GM10248 (cell line): ENCODE measurements at regions of chr17 and their contacts with region 1.

Region 1: DNA sequence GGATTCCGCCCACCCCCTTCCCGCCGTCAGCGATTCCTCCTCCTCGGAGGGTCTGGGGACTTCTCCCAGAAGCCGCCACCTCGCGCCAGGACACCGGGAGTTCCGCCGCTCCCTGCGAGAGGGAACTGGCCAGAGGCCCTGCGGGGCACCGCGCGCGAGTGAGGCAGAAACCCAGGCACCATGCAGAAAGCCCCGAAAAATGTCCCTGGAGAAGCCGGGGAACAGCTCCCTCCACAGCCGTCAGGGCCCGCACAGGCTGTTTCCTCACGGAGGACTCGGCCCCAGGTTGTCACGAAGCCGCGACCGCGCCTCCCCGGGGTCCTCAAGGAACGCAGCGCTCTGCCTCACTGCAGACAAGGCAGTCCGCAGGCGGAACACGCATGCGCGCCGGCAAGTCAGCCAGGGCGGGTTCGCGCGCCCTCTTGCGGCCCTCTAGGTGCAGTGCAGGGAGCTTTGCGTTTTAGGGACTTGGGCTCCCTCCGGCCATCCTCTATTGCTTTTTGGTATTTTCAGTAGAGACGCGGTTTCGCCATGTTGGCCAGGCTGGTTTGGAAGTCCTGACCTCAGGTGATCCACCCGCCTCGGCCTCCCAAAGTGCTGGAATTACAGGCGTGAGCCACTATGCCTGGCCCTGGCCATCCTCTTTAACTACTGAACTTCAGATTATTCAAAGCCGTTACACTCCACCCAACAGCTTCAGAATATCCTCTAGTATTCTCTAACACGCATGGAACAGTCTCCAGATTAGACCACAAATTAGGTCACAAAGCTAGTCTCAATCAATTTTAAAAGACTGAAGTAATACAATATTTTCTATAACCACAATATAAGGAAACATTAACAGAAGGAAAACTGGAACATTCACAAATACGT is 20.3 kb upstream of the ZNF287 start:
- DNase-seq: peak; percentile 97
- CTCF ChIP-seq: peak; percentile 98

Region 2: GRCh38 chr17:16537130-16537458 is 52.2 kb before region 1 on chr17:
- CTCF ChIA-PET with region 1: interaction called, 39 read pairs
- POLR2A ChIA-PET with region 1: no interaction called
- DNase-seq: no peak
- CTCF ChIP-seq: no peak

Region 3: DNA sequence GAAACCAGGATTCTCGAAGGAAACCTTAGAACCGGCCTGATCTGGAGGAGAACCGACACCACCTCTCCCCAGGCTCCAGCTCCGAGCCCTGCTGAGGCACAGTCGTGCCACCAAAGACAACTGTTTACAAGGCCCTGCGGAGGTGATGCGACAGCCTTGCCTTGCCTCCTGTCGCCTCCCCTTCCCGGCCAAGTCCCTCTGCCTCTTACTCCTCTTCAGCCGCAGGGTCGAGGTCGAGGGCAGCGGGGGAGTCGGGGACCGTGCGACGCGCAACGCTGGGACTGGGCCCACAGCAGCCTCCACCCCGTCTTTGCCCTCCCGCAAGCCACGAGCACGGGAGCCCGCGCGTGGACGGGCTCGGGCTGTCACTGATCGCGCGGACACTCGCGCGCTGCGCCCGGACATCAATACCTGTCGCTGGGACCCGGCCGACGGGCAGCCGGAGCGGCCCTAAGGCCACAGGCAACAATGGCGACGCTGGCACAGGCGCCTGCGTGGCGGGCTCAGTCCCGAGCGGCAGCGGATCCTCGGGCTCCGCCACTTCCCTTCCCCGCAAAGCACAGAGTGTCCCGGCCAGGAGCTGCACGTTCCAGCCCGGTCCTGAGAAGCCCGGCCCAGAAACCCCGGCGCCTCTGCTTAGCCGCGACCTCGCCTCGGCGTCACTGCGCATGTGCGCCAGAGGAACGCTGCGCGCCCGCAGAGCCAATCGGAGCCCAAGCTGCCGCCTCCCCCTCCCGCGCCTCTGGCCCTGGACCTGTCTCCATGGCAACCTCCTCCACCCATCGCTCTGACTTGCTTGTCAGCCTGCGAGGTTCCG is 20.6 kb before region 1 on chr17 and contains the start of gene ZNF287:
- CTCF ChIA-PET with region 1: interaction called, 13 read pairs
- POLR2A ChIA-PET with region 1: no interaction called
- DNase-seq: peak; percentile 99
- CTCF ChIP-seq: no peak

Region 4: GRCh38 chr17:16915752-16916556 is 326.6 kb after region 1 on chr17:
- CTCF ChIA-PET with region 1: no interaction called
- POLR2A ChIA-PET with region 1: no interaction called
- DNase-seq: peak; percentile 76
- CTCF ChIP-seq: peak; percentile 75

Region 5: GRCh38 chr17:17280613-17281549 is 691.5 kb after region 1 on chr17 and contains the start of gene COPS3:
- CTCF ChIA-PET with region 1: no interaction called
- POLR2A ChIA-PET with region 1: no interaction called
- DNase-seq: peak; percentile 98
- CTCF ChIP-seq: no peak